ENCODE measurements at regions of chr3 and their contacts with region 1.

Region 1: GRCh38 chr3:42547401-42547945 is 34.3 kb downstream of the SEC22C start:
- DNase-seq: peak; percentile 32 to 84 (median 70)
- ATAC-seq: peak; percentile 80
- H3K4me3 ChIP-seq: no peak overlapping the region
- H3K4me3 Mint-ChIP-seq: no peak overlapping the region
- H3K27ac ChIP-seq: no peak overlapping the region
- H3K27ac Mint-ChIP-seq: no peak overlapping the region
- H3K4me1 ChIP-seq: no peaks in the 10 kb centered on the region
- H3K4me1 Mint-ChIP-seq: peaks cover 4% of the 10 kb centered on the region
- H3K27me3 ChIP-seq: no peaks in the 10 kb centered on the region
- H3K27me3 Mint-ChIP-seq: no peaks in the 10 kb centered on the region
- CTCF ChIP-seq: peak; percentile 90

Region 2: DNA sequence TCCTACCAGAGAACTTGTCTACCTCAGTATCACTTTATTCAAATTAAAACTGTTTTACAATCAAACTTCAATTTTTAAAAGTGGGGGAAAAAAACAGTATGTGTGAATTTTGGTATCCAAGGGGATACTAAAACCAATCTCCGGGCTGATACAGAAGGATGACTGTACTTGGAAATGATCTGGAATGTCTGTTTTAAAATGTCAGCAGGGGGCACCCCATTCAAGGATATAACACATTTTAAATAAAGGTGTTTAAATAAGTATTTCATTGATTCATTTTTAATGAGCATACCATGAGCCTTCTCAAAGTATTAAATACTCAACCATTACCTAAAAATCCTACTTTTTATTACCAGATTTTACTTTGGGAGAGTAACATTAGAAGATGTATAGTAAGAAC is 653.5 kb before region 1 on chr3:
- CTCF ChIA-PET with region 1: no interaction called
- POLR2A ChIA-PET with region 1: no interaction called
- intact Hi-C with region 1: loop called in 1 of 2 experiments (anchors 5 kb)
- DNase-seq: peak in 2 of 9 experiments; percentile 48 to 58
- ATAC-seq: no peak
- H3K4me3 ChIP-seq: no peak overlapping the region
- H3K4me3 Mint-ChIP-seq: no peak overlapping the region
- H3K27ac ChIP-seq: no peak overlapping the region
- H3K27ac Mint-ChIP-seq: no peak overlapping the region
- H3K4me1 ChIP-seq: no peaks in the 10 kb centered on the region
- H3K4me1 Mint-ChIP-seq: no peaks in the 10 kb centered on the region
- H3K27me3 ChIP-seq: no peaks in the 10 kb centered on the region
- H3K27me3 Mint-ChIP-seq: no peaks in the 10 kb centered on the region
- CTCF ChIP-seq: peak; percentile 52

Region 3: DNA sequence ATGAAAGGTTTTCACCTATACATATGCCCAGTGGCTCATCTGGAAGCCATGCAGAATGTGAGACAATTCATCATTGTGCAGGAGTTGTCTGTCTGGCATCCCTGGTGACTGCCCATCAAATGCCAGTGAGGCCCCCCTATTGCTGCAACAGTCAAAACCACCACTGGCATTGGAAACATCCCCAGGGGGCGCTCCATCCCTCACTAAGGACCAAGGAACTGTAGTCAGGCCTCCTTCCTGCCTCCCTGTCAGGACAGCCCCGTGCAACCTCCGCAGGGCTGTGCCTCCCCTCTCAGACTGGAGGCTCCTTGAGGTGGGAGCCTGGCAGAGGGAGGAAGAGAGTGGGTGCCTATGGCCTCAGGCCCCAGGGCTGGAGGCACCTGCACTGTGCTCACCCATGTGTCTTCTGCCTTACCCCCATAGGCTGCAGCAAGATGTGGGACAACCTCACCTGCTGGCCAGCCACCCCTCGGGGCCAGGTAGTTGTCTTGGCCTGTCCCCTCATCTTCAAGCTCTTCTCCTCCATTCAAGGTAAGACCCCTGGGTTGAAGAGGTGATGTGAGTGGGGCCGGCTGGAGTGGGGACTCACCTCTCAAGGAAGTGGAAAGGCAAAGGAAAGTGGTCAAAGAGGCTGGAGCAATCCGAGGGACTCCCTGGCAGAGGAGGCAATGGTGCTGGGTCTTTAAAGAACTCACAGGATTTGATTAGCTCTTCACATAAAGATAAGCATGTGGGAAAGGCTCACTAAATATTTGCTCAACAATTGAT is 28.5 kb before region 1 on chr3:
- CTCF ChIA-PET with region 1: interaction called, 556 read pairs
- POLR2A ChIA-PET with region 1: no interaction called
- intact Hi-C with region 1: no loop called
- DNase-seq: peak; percentile 10 to 75 (median 48)
- ATAC-seq: peak; percentile 55
- H3K4me3 ChIP-seq: no peak overlapping the region
- H3K4me3 Mint-ChIP-seq: no peak overlapping the region
- H3K27ac ChIP-seq: no peak overlapping the region
- H3K27ac Mint-ChIP-seq: peak overlapping the region; percentile 76
- H3K4me1 ChIP-seq: peaks cover 29% of the 10 kb centered on the region
- H3K4me1 Mint-ChIP-seq: peaks cover 30% of the 10 kb centered on the region
- H3K27me3 ChIP-seq: no peaks in the 10 kb centered on the region
- H3K27me3 Mint-ChIP-seq: no peaks in the 10 kb centered on the region
- CTCF ChIP-seq: peak; percentile 34

Region 4: GRCh38 chr3:42526616-42527367 is 20.7 kb before region 1 on chr3:
- CTCF ChIA-PET with region 1: interaction called, 18 read pairs
- POLR2A ChIA-PET with region 1: no interaction called
- intact Hi-C with region 1: no loop called
- DNase-seq: peak in 8 of 9 experiments; percentile 14 to 68 (median 47)
- ATAC-seq: peak; percentile 89
- H3K4me3 ChIP-seq: no peak overlapping the region
- H3K4me3 Mint-ChIP-seq: peak overlapping the region; percentile 60
- H3K27ac ChIP-seq: peak overlapping the region; percentile 2 to 57
- H3K27ac Mint-ChIP-seq: peak overlapping the region; percentile 94
- H3K4me1 ChIP-seq: peaks cover 62% of the 10 kb centered on the region
- H3K4me1 Mint-ChIP-seq: peaks cover 70% of the 10 kb centered on the region
- H3K27me3 ChIP-seq: no peaks in the 10 kb centered on the region
- H3K27me3 Mint-ChIP-seq: no peaks in the 10 kb centered on the region
- CTCF ChIP-seq: peak; percentile 36

Region 5: GRCh38 chr3:42562047-42562907 is 14.8 kb after region 1 on chr3:
- CTCF ChIA-PET with region 1: interaction called, 17 read pairs
- POLR2A ChIA-PET with region 1: no interaction called
- intact Hi-C with region 1: no loop called
- DNase-seq: no peak
- ATAC-seq: no peak
- H3K4me3 ChIP-seq: no peak overlapping the region
- H3K4me3 Mint-ChIP-seq: no peak overlapping the region
- H3K27ac ChIP-seq: no peak overlapping the region
- H3K27ac Mint-ChIP-seq: no peak overlapping the region
- H3K4me1 ChIP-seq: no peaks in the 10 kb centered on the region
- H3K4me1 Mint-ChIP-seq: peaks cover 6% of the 10 kb centered on the region
- H3K27me3 ChIP-seq: no peaks in the 10 kb centered on the region
- H3K27me3 Mint-ChIP-seq: no peaks in the 10 kb centered on the region
- CTCF ChIP-seq: no peak

Region 6: DNA sequence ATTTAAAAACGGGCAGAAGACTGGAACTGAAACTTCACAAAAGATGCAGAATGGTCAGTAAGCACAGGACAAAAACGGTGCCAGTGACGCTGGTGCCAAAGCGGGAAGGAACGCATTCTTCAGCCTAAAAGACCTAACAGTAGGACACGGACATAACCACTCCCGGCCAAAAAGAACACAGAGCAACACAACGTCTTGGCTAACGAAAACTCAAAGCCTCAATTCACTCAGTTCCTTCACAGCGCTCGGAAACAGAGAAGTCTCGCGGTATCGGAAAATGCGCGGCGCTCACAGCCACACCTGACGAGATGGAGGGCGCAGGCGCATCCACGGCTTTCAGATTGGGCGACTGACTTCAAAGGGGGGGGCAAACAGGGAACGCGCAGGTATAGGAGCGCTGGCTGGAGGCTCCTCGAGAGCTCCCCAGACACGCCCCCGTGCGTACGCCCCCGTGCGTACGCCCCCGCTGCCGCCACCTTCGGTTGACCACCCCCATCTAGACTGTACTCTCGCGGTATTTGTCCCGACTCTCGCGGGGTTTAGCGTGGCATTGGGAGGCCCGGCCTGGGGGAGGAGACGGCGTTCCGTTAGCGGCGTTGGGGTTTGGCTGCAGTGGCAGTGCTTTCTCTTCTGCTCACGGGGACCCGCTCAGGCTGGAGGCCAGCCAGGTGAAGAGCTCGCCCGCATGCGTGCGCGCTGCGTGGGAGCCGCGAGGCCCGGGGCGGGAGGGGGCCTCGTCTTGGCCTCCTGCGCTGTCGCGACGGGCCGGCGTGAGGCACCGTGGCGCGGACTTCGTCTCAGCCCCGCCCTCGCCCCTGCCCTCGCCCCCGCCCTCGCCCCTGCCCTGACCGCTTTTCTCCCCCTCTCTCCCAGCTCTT is 52.9 kb after region 1 on chr3 and contains the start of gene NKTR:
- CTCF ChIA-PET with region 1: interaction called, 7 read pairs
- POLR2A ChIA-PET with region 1: no interaction called
- intact Hi-C with region 1: loop called in 1 of 2 experiments (anchors 2 kb)
- DNase-seq: peak; percentile 99 to 100 (median 100)
- ATAC-seq: peak; percentile 94
- H3K4me3 ChIP-seq: peak within 1 kb of the TSS; percentile 56 to 96
- H3K4me3 Mint-ChIP-seq: peak within 1 kb of the TSS; percentile 93
- H3K27ac ChIP-seq: peak within 1 kb of the TSS; percentile 69 to 81
- H3K27ac Mint-ChIP-seq: peak within 1 kb of the TSS; percentile 97
- H3K4me1 ChIP-seq: peaks cover 22% of the 10 kb centered on the region
- H3K4me1 Mint-ChIP-seq: peaks cover 39% of the 10 kb centered on the region
- H3K27me3 ChIP-seq: no peaks in the 10 kb centered on the region
- H3K27me3 Mint-ChIP-seq: no peaks in the 10 kb centered on the region
- CTCF ChIP-seq: no peak
- total RNA-seq, gene NKTR: 190 to 204 TPM

Region 7: DNA sequence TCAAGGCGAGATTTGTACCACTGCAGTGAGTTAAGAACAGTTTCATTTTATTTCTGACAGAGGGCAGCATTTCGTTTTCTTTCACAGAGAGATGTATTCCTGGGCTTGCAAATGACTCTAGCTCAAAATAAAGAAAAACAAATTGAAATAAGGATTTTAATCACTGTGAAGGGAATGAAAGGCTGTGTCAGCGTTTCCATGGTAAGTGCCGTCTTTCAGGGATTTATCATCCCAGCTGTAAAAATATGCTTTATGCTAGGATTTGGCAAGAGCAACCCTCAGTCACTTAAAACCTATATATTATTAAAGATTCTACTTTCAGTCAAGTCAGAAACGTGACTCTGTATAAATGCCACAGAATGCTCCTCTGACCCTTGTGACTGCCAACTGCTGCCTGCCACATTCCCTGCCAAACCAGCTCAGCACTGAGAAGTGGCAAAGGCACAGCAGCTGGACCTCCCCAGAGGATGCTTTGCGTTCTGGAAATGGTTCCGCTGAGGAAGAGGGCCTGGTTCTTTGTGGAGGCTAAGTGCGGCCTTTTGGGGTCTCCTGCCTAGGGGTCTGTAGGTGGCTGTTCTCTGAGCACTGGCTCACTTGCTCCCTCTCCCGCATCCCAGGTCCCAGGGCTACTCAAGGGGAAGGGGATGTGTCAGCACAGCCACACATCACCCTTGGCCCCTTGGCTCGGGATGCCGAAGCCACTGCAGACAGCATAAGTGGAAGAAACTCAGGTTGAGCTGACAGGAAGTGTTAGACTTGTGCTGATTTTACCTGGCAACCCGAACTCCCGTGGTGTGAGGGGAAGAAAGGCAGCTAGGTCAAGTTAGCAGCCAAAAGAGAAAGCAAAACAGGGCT is 615.0 kb after region 1 on chr3:
- CTCF ChIA-PET with region 1: no interaction called
- POLR2A ChIA-PET with region 1: no interaction called
- intact Hi-C with region 1: no loop called
- DNase-seq: peak; percentile 26 to 84 (median 62)
- ATAC-seq: peak; percentile 94
- H3K4me3 ChIP-seq: peak overlapping the region; percentile 18 to 30
- H3K4me3 Mint-ChIP-seq: peak overlapping the region; percentile 82
- H3K27ac ChIP-seq: peak overlapping the region; percentile 64 to 79
- H3K27ac Mint-ChIP-seq: peak overlapping the region; percentile 100
- H3K4me1 ChIP-seq: peaks cover 26% of the 10 kb centered on the region
- H3K4me1 Mint-ChIP-seq: peaks cover 28% of the 10 kb centered on the region
- H3K27me3 ChIP-seq: no peaks in the 10 kb centered on the region
- H3K27me3 Mint-ChIP-seq: no peaks in the 10 kb centered on the region
- CTCF ChIP-seq: peak; percentile 67